HCT116 (cell line): ENCODE measurements at regions of chr12 and their contacts with region 1.

Region 1: GRCh38 chr12:5745265-5745888 is 199.7 kb downstream of the ANO2 start:
- DNase-seq: peak; percentile 47
- ATAC-seq: peak; percentile 100
- H3K4me3 ChIP-seq: no peak overlapping the region
- H3K27ac ChIP-seq: no peak overlapping the region
- H3K4me1 ChIP-seq: no peaks in the 10 kb centered on the region
- H3K27me3 ChIP-seq: no peaks in the 10 kb centered on the region
- CTCF ChIP-seq: peak; percentile 46 to 94 (median 79); a peak in 5 of 6 replicates
- POLR2A ChIP-seq: no peak
- RAD21 ChIP-seq: peak; percentile 62

Region 2: DNA sequence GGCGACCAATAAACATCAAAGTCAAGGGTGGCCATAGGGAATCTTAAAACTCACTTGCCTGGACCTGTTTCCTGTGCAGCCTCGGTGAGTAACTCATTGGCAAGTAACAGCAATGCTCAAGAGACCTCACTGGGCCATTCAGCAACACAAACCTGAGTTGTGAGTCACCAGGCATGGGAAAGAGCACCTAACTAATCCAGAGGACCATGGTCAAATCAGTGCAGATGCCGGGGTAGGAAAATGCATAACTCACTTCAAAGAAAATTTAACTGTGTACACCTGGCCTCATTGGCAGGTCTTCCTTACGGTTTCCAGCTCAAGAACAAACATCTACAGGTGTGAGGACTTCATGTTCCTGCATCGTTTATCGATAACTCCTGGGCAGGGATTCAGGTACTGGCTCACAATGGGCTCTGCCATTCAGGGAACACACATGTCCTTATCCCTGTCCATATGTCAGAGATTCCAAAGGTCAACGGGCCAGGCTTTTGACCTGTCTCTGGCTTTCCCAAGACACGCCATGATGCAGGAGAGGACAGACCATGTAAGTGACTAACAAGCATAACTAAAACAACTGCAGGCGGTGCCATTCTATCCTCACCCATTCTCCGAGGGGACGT is 12.1 kb before region 1 on chr12:
- CTCF ChIA-PET with region 1: interaction called, 12 read pairs
- POLR2A ChIA-PET with region 1: no interaction called
- RAD21 ChIA-PET with region 1: no interaction called
- intact Hi-C with region 1: no loop called
- DNase-seq: no peak
- ATAC-seq: no peak
- H3K4me3 ChIP-seq: no peak overlapping the region
- H3K27ac ChIP-seq: no peak overlapping the region
- H3K4me1 ChIP-seq: no peaks in the 10 kb centered on the region
- H3K27me3 ChIP-seq: 0 out of 2 replicates have a peak, but pooled peaks cover 4% of the 10 kb centered on the region
- CTCF ChIP-seq: no peak
- POLR2A ChIP-seq: no peak
- RAD21 ChIP-seq: no peak

Region 3: GRCh38 chr12:5796171-5796958 is 51.0 kb after region 1 on chr12:
- CTCF ChIA-PET with region 1: interaction called, 9 read pairs
- POLR2A ChIA-PET with region 1: no interaction called
- RAD21 ChIA-PET with region 1: interaction called in 1 of 2 experiments, 3 read pairs
- intact Hi-C with region 1: loop called (anchors 1 kb)
- DNase-seq: no peak
- ATAC-seq: peak; percentile 98
- H3K4me3 ChIP-seq: no peak overlapping the region
- H3K27ac ChIP-seq: no peak overlapping the region
- H3K4me1 ChIP-seq: no peaks in the 10 kb centered on the region
- H3K27me3 ChIP-seq: no peaks in the 10 kb centered on the region; the same call in 1 of the 2 replicates
- CTCF ChIP-seq: peak; percentile 32 to 83 (median 69); a peak in 5 of 6 replicates
- POLR2A ChIP-seq: no peak
- RAD21 ChIP-seq: peak; percentile 75

Region 4: GRCh38 chr12:5872735-5873134 is 127.4 kb after region 1 on chr12:
- CTCF ChIA-PET with region 1: interaction called, 11 read pairs
- POLR2A ChIA-PET with region 1: no interaction called
- RAD21 ChIA-PET with region 1: no interaction called
- intact Hi-C with region 1: loop called (anchors 1 kb)
- DNase-seq: peak; percentile 16
- ATAC-seq: peak; percentile 86
- H3K4me3 ChIP-seq: no peak overlapping the region
- H3K27ac ChIP-seq: no peak overlapping the region
- H3K4me1 ChIP-seq: no peaks in the 10 kb centered on the region
- H3K27me3 ChIP-seq: no peaks in the 10 kb centered on the region; the same call in 1 of the 2 replicates
- CTCF ChIP-seq: peak; percentile 42 to 65 (median 58); a peak in 5 of 6 replicates
- POLR2A ChIP-seq: no peak
- RAD21 ChIP-seq: peak; percentile 59

Region 5: DNA sequence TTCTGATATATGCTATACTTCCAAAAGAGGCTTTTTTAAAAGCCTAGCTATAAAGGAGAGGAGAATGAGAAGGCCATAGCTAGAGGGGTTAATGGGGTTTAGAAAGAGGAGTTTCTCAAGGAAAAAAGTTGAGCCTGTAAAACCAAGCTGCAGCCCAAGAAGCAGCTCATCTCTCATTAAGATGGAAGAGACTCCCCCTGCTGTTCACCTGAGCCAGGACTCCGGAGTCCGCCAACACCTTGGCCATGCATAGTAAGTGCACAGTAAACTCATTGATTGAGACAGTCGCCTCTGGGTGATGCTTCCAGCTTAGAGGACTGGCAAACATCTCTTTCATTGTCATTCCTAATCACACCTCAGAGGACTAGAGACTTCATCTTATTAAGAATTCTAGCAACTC is 153.5 kb after region 1 on chr12:
- CTCF ChIA-PET with region 1: interaction called, 25 read pairs
- POLR2A ChIA-PET with region 1: no interaction called
- RAD21 ChIA-PET with region 1: interaction called, 5 to 6 read pairs
- intact Hi-C with region 1: loop called (anchors 1 kb)
- DNase-seq: no peak
- ATAC-seq: peak; percentile 95
- H3K4me3 ChIP-seq: no peak overlapping the region
- H3K27ac ChIP-seq: no peak overlapping the region
- H3K4me1 ChIP-seq: no peaks in the 10 kb centered on the region
- H3K27me3 ChIP-seq: 0 out of 2 replicates have a peak, but pooled peaks cover 4% of the 10 kb centered on the region
- CTCF ChIP-seq: peak; percentile 19 to 65 (median 63); a peak in 5 of 6 replicates
- POLR2A ChIP-seq: no peak
- RAD21 ChIP-seq: peak; percentile 40

Region 6: GRCh38 chr12:6039894-6040568 is 294.7 kb after region 1 on chr12:
- CTCF ChIA-PET with region 1: interaction called, 4 read pairs
- POLR2A ChIA-PET with region 1: no interaction called
- RAD21 ChIA-PET with region 1: no interaction called
- intact Hi-C with region 1: loop called (anchors 2 kb)
- DNase-seq: peak; percentile 57
- ATAC-seq: peak; percentile 85
- H3K4me3 ChIP-seq: no peak overlapping the region
- H3K27ac ChIP-seq: no peak overlapping the region
- H3K4me1 ChIP-seq: peaks cover 4 to 19% of the 10 kb centered on the region in 2 experiments; a peak in 3 of 4 replicates
- H3K27me3 ChIP-seq: no peaks in the 10 kb centered on the region
- CTCF ChIP-seq: peak; percentile 83 to 92 (median 89)
- POLR2A ChIP-seq: no peak
- RAD21 ChIP-seq: peak; percentile 93